Activated CD4-positive, alpha-beta T cell treated with anti-CD3 and anti-CD28 coated beads, Interleukin-2, amount 10 ng/mL, durations not matched to agents 24 days and 14 days (primary cell): ENCODE measurements at regions of chr10 and their contacts with region 1.

Region 1: DNA sequence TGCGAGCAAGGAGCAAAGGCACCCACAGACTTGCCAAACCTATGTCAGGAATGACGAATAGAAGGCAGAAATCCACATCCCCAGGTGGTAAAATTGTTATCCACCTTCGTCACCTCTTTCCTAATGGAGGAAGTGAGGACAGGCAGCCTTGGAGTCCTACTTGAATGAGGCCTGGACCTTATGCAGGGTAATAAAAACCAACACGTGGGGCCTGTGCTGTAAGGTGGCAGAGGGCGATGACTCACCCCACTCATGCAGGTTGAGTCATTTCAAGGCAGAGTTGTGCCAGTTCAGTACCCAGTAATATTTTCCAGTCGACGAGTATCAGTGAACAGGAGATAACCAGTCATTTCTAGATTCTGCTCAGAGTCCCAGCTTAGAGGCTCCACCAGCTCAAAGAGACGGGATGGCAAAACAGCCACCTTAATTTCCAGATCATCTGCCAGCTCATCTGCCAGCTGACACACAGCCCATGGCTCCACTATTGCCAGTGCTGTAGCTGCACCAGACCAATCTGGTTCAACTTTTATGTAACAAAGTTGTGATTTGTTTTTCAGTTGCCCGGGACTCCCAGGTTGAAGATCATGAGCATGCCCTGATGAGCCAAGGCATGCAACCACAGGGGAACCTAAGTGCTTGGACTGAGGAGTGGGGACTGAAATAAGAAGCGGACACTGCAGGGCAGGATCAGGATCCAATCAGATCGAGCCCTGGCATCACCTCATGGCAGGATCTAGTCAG is 176.2 kb upstream of the ITGB1 start:
- DNase-seq: peak; percentile 83
- H3K4me3 Mint-ChIP-seq: peak overlapping the region; percentile 29
- H3K27ac Mint-ChIP-seq: peak overlapping the region; percentile 87
- H3K4me1 Mint-ChIP-seq: peaks cover 50% of the 10 kb centered on the region
- H3K27me3 Mint-ChIP-seq: peaks cover 2% of the 10 kb centered on the region

Region 2: GRCh38 chr10:32055813-32056600 is 1078.2 kb before region 1 on chr10 and contains the start of gene KIF5B:
- intact Hi-C with region 1: loop called (anchors 10 kb)
- DNase-seq: peak; percentile 97
- H3K4me3 Mint-ChIP-seq: peak within 1 kb of the TSS; percentile 92
- H3K27ac Mint-ChIP-seq: peak within 1 kb of the TSS; percentile 96
- H3K4me1 Mint-ChIP-seq: peaks cover 36% of the 10 kb centered on the region
- H3K27me3 Mint-ChIP-seq: no peaks in the 10 kb centered on the region
- total RNA-seq, gene KIF5B: 81.3 and 82.2 TPM in 2 replicates

Region 3: GRCh38 chr10:32332299-32332750 is 801.9 kb before region 1 on chr10:
- intact Hi-C with region 1: loop called (anchors 5 kb)
- DNase-seq: peak; percentile 91
- H3K4me3 Mint-ChIP-seq: peak overlapping the region; percentile 75
- H3K27ac Mint-ChIP-seq: peak overlapping the region; percentile 91
- H3K4me1 Mint-ChIP-seq: peaks cover 76% of the 10 kb centered on the region
- H3K27me3 Mint-ChIP-seq: no peaks in the 10 kb centered on the region

Region 4: GRCh38 chr10:32958085-32959005 is 175.8 kb before region 1 on chr10 and contains the start of gene ITGB1:
- intact Hi-C with region 1: loop called (anchors 1 kb)
- DNase-seq: peak; percentile 96
- H3K4me3 Mint-ChIP-seq: peak within 1 kb of the TSS; percentile 86
- H3K27ac Mint-ChIP-seq: peak within 1 kb of the TSS; percentile 92
- H3K4me1 Mint-ChIP-seq: peaks cover 32% of the 10 kb centered on the region
- H3K27me3 Mint-ChIP-seq: peaks cover 9% of the 10 kb centered on the region
- total RNA-seq, gene ITGB1: 50.5 and 57.5 TPM in 2 replicates

Region 5: DNA sequence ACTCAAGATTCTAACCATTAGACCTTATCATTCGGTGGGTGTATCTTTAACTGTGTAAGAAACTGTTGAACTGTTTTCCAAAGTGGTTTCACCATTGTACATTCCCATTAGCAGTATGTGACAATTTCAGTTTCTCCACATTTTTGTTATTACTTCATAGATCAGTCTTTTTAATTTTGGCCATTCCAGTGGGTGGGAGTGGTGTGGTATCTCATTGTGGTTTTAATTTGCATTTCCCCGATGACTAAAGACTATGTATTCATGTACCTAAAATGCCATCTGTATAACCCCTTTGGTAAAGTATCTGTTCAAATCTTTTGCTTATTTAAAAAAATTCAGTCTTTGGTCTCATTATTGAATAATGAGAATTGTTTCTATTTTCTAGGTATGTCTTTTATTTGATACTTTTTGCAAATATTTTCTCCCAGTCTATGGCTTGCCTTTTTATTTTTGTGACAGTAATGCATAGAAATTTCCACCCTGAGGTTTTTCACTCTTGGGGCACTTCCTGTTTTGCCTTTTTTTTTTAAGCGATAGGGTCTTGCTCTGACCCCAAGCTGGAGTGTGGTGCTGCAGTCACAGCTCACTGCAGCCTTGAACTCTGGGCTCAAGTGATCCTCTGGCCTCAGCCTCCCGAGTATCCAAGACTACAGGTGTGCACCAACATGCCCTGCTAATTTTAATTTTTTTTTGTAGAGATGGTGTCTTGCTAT is 35.1 kb before region 1 on chr10:
- intact Hi-C with region 1: loop called (anchors 2 kb)
- DNase-seq: no peak
- H3K4me3 Mint-ChIP-seq: no peak overlapping the region
- H3K27ac Mint-ChIP-seq: peak overlapping the region; percentile 86
- H3K4me1 Mint-ChIP-seq: peaks cover 27% of the 10 kb centered on the region
- H3K27me3 Mint-ChIP-seq: no peaks in the 10 kb centered on the region

Region 6: DNA sequence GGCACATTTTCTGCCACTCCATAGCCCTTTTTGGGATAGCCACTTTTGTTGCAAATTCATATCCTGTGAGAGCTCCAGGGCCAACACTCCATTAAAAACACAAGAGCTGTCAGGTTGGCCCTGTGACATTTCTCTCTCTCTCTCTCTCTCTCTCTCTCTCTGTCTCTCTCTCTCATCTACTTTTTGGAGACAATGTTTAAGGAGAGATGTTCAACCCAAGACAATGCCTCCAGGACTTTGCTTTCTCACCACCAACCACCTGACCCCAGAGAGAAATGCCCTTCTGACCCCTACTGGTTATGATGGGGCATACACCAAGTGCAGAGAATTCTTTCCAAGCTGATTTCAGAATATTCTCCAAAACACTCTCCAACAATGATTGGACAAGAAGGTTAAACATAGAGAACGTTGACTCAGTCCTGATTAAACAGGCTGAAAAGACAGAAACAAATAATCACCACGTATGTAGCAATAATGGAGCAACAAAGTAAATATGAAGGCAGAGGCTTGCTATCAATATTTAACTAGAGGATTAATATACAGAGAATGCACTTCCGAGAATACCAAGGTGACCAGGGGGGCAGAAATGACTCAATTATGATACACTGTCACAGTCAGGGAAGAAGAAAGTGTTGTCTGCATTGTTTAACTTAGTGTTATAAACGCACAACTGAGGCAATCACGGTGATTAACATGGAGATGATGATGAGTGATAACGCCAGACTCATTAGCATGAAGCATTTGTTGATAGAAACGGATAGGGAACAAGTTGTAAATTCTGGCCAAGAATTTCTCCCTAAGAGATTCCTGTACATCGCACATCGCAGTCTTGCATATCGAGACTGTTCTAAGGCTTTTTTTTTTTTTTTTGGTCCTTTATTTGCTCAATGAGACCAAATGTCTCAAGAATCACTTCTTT is 21.8 kb after region 1 on chr10:
- intact Hi-C with region 1: loop called (anchors 1 kb)
- DNase-seq: peak; percentile 81
- H3K4me3 Mint-ChIP-seq: no peak overlapping the region
- H3K27ac Mint-ChIP-seq: no peak overlapping the region
- H3K4me1 Mint-ChIP-seq: peaks cover 25% of the 10 kb centered on the region
- H3K27me3 Mint-ChIP-seq: no peaks in the 10 kb centered on the region

Region 7: DNA sequence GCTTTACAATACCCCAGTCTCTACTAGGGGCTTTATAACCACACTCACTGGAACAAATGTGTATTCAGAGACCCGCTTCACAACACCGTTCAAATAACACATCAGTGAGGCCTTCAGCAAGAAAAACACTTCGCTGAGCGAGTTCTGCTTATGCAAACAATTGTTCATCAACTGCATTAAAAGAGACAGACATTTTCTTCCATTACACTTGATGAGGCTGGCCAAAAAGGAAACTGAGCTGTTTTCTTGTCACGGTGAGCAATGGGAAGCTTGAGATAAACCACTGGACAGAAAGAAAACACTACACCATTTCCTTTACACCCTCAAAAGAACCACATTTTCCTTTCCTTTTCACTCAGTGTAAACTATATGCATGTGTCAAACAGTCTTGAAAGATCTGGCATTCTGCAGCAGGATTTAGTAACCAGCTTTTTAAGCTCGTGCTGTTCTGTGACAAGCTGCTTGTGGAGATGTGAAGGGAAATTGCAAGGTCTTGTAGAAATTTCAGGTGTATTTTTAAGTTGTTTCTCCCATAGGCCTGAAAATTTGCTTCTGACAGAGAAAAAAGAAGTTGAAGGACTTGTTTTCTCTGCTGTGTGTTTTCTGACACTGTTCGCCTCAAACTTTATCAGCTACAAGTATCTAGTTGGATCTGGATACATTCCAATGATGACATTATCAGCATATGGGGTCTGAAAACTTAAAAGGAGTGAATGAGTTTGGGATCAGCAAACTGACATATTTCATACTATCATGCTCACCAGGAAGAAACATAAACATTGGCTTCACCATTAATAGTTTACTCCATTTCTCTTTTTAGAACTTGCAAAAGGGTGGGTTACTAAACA is 987.8 kb after region 1 on chr10:
- intact Hi-C with region 1: loop called (anchors 10 kb)
- DNase-seq: peak; percentile 77
- H3K4me3 Mint-ChIP-seq: peak overlapping the region; percentile 56
- H3K27ac Mint-ChIP-seq: peak overlapping the region; percentile 77
- H3K4me1 Mint-ChIP-seq: peaks cover 24% of the 10 kb centered on the region
- H3K27me3 Mint-ChIP-seq: no peaks in the 10 kb centered on the region